ENCODE measurements at regions of chr1 and their contacts with region 1.

Region 1: GRCh38 chr1:107529502-107530149 is 388.8 kb downstream of the NTNG1 start:
- DNase-seq: peak; percentile 39
- H3K4me3 ChIP-seq: no peak overlapping the region
- CTCF ChIP-seq: peak; percentile 83

Region 2: DNA sequence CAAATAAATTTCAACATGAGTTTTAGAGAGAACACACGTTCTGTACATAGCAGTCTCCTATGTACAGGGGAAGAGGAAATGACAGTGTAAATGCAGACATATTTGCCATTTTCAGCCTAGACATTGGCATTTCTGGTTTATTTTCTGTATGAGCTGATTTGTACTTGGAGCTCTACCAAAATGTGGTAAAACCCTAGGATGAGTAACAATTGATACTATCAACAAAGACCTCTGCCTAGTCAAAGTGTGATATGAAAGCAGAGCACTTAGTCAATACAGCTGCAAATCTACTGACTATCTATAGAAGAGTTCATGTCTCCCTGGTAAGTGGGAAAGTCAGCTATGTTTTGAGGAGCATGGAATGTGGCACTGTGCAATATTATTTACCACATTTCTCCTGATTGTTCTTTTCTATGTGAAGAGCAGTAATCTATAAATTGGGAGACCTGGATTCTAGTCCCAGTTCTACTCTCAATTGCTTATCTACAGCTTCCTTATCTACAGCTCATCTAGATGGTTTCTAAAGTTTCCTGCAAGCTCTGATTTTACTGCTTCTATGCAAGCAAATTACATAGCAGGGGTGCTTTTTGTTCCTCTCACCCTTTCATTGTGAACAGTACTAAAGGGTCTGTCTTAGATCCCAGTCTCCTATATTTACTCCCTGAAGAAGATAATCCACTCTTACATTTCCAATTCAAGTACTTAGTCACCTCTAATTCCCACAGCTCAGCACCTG is 54.6 kb before region 1 on chr1:
- in situ Hi-C with region 1: loop called (anchors 5 kb)
- DNase-seq: no peak
- H3K4me3 ChIP-seq: no peak overlapping the region
- CTCF ChIP-seq: no peak

Measured in astrocyte of the cerebellum (primary cell).